AG04450 (cell line): ENCODE measurements at regions of chr6 and their contacts with region 1.

Region 1: DNA sequence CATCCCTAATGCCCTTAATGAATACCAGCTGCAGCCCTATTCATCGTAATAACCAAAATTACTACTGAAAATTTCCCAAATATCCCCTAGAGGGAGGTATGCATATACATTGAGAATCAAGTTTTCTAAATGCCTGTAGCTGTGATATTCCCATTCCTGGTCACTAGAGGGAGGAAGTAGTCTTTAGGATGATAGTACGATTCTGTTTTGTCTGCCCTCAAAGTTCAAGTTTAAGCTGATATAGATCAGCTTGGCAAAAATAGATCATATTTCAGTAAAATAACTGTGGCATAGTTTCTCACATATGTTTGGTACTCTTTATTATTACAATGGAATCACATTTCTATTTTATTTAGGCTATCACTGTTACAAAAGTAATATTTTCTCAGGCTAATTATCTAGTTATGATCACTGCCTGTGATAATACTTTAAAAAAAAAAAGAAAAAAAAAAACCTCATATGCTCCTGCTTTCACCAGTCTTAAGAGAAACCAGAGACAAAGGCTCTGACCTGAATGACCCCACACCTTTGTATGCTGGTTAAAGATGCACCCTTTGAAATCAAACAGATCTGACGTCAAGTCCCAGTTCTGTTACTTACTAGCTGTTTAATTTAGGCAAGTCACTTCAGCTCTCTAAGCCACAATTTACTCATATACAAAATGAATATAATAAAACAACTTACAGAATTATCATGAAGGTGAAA is 11.0 kb downstream of the TSPYL1 start:
- DNase-seq: peak; percentile 65
- H3K4me3 ChIP-seq: no peak overlapping the region
- H3K27ac ChIP-seq: no peak overlapping the region
- H3K27me3 ChIP-seq: no peaks in the 10 kb centered on the region
- CTCF ChIP-seq: peak; percentile 96

Region 2: DNA sequence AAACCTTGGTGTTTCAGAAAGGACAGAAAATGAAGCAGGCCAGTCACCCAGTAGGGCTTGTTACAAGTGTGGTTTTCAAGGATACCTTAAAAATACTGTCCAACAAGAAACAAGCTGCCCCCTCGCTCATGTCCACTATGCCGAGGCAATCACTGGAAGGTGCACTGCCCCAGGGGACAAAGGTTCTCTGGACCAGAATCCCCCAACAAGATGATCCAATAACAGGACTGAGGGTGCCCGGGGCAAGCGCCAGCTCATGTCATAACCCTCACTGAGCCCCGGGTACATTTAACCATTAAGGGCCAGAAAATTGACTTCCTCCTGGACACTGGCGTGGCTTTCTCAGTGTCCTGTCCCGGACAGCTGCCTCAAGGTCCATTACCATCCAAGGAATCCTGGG is 174.7 kb before region 1 on chr6:
- CTCF ChIA-PET with region 1: no interaction called
- POLR2A ChIA-PET with region 1: no interaction called
- DNase-seq: no peak
- H3K4me3 ChIP-seq: no peak overlapping the region
- H3K27ac ChIP-seq: no peak overlapping the region
- H3K27me3 ChIP-seq: no peaks in the 10 kb centered on the region
- CTCF ChIP-seq: no peak

Region 3: GRCh38 chr6:116229287-116229913 is 39.3 kb before region 1 on chr6:
- CTCF ChIA-PET with region 1: interaction called, 13 read pairs
- POLR2A ChIA-PET with region 1: no interaction called
- DNase-seq: peak; percentile 81
- H3K4me3 ChIP-seq: peak overlapping the region; percentile 48
- H3K27ac ChIP-seq: no peak overlapping the region
- H3K27me3 ChIP-seq: no peaks in the 10 kb centered on the region
- CTCF ChIP-seq: no peak

Region 4: DNA sequence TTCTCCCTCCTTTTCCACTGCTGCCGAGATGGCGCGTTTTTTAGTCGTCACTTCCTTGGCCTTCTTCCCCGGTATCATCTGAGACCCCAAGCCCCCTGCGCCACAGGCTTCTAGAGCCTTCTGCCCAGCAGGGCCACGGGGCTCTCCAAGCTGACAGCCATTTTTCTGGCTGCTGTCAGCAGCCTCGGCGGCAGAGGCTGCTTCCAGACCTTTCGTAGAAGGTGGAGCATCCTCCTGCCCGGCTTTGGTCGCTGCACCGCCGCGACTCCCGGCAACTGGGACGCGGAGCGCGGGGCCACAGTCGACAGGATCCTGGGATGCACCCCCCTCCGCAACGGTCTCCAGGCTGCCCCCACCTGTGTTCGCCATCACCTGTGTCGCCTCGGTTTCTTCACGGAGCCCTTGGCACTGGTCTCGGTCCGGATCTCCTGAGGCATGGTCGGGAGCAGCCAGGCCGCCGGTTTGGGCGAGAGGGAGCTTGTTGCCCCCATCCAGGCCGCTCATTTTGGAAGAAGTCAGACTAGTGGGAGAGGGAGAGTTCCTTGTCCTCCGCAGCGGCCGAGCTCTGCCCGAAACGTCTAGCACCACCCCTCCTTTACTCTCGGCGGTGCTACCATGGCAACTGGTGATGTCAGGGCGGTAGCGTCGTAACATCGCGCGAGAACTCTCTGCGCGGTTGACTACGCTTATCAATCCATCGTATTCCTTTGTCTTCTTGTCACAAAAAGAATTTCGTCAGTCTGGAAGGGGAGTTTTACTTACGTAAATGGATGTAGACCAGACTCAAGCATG is 15.0 kb before region 1 on chr6 and contains the start of gene TSPYL4:
- CTCF ChIA-PET with region 1: interaction called, 45 read pairs
- POLR2A ChIA-PET with region 1: interaction called, 3 read pairs
- DNase-seq: peak; percentile 91
- H3K4me3 ChIP-seq: peak within 1 kb of the TSS; percentile 97
- H3K27ac ChIP-seq: peak within 1 kb of the TSS; percentile 86
- H3K27me3 ChIP-seq: no peaks in the 10 kb centered on the region
- CTCF ChIP-seq: no peak
- polyA plus RNA-seq, gene TSPYL4: 22.0 and 25.1 TPM in 2 replicates

Region 5: DNA sequence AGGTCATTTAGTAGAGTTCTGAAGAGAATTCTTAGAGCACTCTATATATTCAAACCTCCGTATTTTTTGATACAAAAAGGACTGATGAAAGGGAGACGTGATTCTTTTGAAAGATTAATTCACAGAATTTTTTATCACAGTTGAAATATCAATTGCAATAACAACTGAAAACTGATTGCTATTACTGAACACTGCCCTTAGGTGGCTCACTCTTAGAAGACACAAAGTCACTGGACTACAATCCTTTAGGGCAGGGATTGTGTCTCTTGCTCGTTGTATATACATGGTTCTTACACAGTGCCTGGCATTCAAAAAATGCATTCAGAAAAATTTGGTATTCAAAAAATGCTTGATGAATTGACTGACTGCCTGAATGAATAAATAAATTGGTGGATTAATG is 175.4 kb after region 1 on chr6:
- CTCF ChIA-PET with region 1: interaction called, 10 read pairs
- POLR2A ChIA-PET with region 1: no interaction called
- DNase-seq: no peak
- H3K4me3 ChIP-seq: no peak overlapping the region
- H3K27ac ChIP-seq: no peak overlapping the region
- H3K27me3 ChIP-seq: no peaks in the 10 kb centered on the region
- CTCF ChIP-seq: peak; percentile 57

Region 6: GRCh38 chr6:116542426-116542825 is 273.7 kb after region 1 on chr6:
- CTCF ChIA-PET with region 1: interaction called, 27 read pairs
- POLR2A ChIA-PET with region 1: no interaction called
- DNase-seq: no peak
- H3K4me3 ChIP-seq: no peak overlapping the region
- H3K27ac ChIP-seq: no peak overlapping the region
- H3K27me3 ChIP-seq: no peaks in the 10 kb centered on the region
- CTCF ChIP-seq: no peak

Region 7: GRCh38 chr6:116580198-116580597 is 311.5 kb after region 1 on chr6:
- CTCF ChIA-PET with region 1: interaction called, 12 read pairs
- POLR2A ChIA-PET with region 1: no interaction called
- DNase-seq: no peak
- H3K4me3 ChIP-seq: no peak overlapping the region
- H3K27ac ChIP-seq: no peak overlapping the region
- H3K27me3 ChIP-seq: no peaks in the 10 kb centered on the region
- CTCF ChIP-seq: no peak